SK-N-SH (cell line): ENCODE measurements at regions of chr1 and their contacts with region 1.

Region 1: DNA sequence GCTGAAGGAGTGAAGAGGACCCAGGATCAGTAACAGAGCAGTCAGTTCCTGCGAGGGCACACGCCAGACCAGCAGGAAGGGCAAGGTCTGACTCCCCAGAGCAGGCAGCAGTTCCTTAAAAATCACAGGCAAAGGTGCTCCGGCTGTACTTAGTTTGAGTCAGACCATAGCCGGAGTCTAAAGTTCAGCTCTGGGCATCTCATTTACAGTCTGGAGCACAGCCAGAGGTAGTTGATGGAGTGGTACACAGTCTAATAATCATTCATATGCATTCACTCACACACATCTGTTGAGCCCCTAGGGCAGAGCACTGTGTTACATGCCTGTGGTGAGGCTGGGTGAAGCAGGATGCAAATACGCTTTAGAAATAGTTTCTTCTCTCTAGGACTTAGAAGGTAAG is 7.3 kb upstream of the AMIGO1 start:
- DNase-seq: no peak
- H3K4me3 ChIP-seq: no peak overlapping the region
- H3K27ac ChIP-seq: no peak overlapping the region
- H3K4me1 ChIP-seq: peaks cover 0 to 8% of the 10 kb centered on the region in 2 experiments; a peak in 1 of 4 replicates
- H3K27me3 ChIP-seq: no peaks in the 10 kb centered on the region; the same call in 1 of the 2 replicates
- CTCF ChIP-seq: no peak
- EP300 ChIP-seq: no peak
- RAD21 ChIP-seq: no peak

Region 2: DNA sequence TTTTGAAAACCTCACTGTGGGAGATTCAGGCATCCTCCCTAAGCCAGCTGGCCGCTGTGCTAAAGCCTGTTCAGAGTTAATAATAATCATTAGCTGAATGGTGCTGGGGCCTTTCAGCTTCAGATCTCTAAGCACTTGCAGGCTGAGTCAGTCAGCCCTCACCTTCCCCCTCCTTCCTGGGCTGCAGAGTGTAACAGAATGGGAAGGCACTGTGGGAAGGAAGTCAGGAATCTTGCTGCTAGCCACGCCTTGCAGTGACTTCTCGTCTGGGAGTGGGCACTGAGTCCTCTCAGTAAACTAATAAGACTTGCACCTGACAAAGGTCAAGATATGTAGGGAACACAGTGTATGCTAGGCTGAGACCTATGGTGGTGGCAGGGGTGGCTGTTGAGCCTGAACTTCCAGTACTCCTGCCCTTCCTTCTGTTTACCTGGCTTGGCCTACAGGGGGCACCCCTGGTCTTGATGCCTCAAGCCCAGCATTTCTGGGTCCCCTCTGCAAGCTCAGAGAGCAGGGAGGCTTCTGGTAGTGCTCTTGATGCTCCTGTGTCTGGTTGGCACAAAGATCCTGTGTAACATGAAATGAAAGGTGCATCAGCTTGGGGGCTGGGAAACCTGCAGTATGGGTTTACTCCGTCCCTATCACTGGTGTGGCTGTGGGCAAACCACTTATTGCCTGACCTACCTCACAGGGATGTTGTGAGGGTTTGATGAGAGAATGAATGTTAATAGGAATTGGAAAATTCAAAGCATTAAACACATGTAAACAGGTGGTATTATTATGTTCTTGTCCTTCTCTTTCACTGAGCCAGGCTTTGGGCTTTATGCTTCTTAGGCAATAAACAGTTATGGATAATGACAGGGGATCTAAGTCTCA is 17.0 kb before region 1 on chr1:
- CTCF ChIA-PET with region 1: interaction called, 1,710 read pairs
- POLR2A ChIA-PET with region 1: no interaction called
- DNase-seq: peak; percentile 42
- H3K4me3 ChIP-seq: no peak overlapping the region
- H3K27ac ChIP-seq: no peak overlapping the region; a peak in 1 of 4 replicates
- H3K4me1 ChIP-seq: peaks cover 0 to 17% of the 10 kb centered on the region in 2 experiments; a peak in 1 of 4 replicates
- H3K27me3 ChIP-seq: no peaks in the 10 kb centered on the region
- CTCF ChIP-seq: peak; percentile 55
- EP300 ChIP-seq: no peak
- RAD21 ChIP-seq: peak; percentile 24; the same call in 1 of the 2 replicates

Region 3: GRCh38 chr1:109630081-109630897 is 113.4 kb after region 1 on chr1:
- CTCF ChIA-PET with region 1: no interaction called
- POLR2A ChIA-PET with region 1: no interaction called
- DNase-seq: peak; percentile 84
- H3K4me3 ChIP-seq: no peak overlapping the region
- H3K27ac ChIP-seq: peak overlapping the region in 1 of 2 experiments; percentile 97; a peak in 2 of 4 replicates
- H3K4me1 ChIP-seq: peaks cover 0 to 46% of the 10 kb centered on the region in 2 experiments; a peak in 2 of 4 replicates
- H3K27me3 ChIP-seq: no peaks in the 10 kb centered on the region
- CTCF ChIP-seq: 0 out of 2 replicates have a peak, but pooled peaks have one; percentile 4
- EP300 ChIP-seq: no peak
- RAD21 ChIP-seq: no peak

Region 4: GRCh38 chr1:109719337-109719837 is 202.5 kb after region 1 on chr1:
- CTCF ChIA-PET with region 1: no interaction called
- POLR2A ChIA-PET with region 1: no interaction called
- DNase-seq: no peak
- H3K4me3 ChIP-seq: no peak overlapping the region
- H3K27ac ChIP-seq: 0 out of 4 replicates have a peak overlapping the region, but pooled peaks of 1 of the 2 experiments have one; percentile 23
- H3K4me1 ChIP-seq: peaks cover 0 to 6% of the 10 kb centered on the region in 2 experiments; a peak in 2 of 4 replicates
- H3K27me3 ChIP-seq: no peaks in the 10 kb centered on the region
- CTCF ChIP-seq: no peak
- EP300 ChIP-seq: no peak
- RAD21 ChIP-seq: no peak

Region 5: GRCh38 chr1:110155878-110156522 is 639.1 kb after region 1 on chr1:
- CTCF ChIA-PET with region 1: no interaction called
- POLR2A ChIA-PET with region 1: no interaction called
- DNase-seq: no peak
- H3K4me3 ChIP-seq: no peak overlapping the region
- H3K27ac ChIP-seq: no peak overlapping the region
- H3K4me1 ChIP-seq: peaks cover 0 to 13% of the 10 kb centered on the region in 2 experiments; a peak in 1 of 4 replicates
- H3K27me3 ChIP-seq: no peaks in the 10 kb centered on the region
- CTCF ChIP-seq: no peak
- EP300 ChIP-seq: no peak
- RAD21 ChIP-seq: no peak